Posterior vena cava (tissue), 2 donors: ENCODE measurements at regions of chr5 and their contacts with region 1.

Region 1: DNA sequence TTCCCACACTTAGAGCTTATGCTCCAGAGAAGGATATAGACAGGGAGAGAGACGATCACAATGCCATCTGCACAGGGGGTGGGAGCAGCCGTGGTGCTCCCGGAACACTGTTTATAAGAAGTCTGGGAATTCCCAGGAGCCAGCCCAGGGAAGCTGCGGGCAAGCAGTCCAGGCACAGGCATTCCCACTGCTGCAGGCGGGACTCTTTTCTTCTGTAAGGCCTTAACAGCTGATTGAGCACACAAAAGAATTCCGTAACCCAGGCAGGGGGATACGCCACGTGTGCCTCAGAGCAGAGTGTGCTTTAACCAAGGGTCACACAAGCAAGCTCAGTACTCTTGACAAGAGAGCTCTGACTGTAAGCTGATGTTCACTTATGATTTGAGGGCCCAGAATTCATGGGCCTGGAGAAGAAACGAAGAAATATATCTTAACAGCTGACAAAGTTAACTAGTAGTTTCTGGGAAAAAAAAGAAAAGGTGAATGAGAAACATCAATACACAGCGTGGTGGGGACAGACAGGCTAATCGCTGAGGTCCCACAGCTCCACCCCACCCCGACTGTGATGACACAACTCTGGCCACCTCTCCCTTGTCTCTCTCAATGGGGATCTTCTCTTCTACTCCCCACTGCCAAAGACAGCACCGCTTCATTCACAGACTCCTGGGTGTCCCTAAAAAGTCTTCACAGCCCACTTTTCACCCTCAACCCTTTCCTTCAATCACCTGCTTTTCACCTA is 85.9 kb upstream of the SIMC1 start:
- DNase-seq: no peak

Region 2: DNA sequence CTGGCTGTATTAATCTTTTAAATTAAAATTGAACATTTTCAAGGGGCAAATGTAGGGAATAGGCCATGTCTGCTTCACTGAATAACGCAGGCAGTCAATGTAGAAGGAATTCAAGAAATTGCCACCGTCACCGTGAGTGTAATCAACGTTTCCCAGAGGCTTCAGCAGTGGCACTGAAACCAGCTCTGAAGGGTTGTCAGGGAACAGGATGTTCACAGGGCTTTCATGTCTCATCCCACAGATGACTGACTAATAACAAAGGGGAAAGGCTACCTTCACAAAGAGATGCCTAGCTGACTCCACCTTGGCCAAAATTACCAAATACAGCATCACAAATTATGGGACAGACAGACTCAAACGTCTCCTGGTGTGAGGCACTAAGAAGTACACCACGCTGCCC is 15.4 kb after region 1 on chr5:
- intact Hi-C with region 1: no loop called
- DNase-seq: no peak

Region 3: DNA sequence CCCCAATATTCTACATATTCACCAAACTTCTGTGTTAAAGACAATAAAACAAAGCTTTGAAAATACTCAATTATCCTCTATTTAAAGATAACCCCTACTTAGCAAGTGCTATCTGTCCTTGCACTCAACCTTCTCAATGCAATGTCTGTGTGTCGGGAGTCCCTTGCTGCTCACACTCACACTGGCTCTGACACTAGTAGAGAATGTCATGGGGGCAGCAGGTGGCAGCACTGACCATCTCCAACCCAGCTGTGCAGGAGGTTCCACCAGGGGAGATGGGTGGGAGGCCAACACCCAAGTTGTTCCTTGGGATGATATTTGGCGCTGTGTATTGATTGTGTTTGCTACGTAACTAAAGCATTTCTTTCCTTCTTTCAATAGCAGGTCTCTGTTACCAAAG is 26.4 kb after region 1 on chr5:
- intact Hi-C with region 1: loop called in 1 of 2 experiments (anchors 1 kb)
- DNase-seq: no peak

Region 4: GRCh38 chr5:176201811-176202210 is 49.5 kb after region 1 on chr5:
- intact Hi-C with region 1: no loop called
- DNase-seq: no peak

Region 5: DNA sequence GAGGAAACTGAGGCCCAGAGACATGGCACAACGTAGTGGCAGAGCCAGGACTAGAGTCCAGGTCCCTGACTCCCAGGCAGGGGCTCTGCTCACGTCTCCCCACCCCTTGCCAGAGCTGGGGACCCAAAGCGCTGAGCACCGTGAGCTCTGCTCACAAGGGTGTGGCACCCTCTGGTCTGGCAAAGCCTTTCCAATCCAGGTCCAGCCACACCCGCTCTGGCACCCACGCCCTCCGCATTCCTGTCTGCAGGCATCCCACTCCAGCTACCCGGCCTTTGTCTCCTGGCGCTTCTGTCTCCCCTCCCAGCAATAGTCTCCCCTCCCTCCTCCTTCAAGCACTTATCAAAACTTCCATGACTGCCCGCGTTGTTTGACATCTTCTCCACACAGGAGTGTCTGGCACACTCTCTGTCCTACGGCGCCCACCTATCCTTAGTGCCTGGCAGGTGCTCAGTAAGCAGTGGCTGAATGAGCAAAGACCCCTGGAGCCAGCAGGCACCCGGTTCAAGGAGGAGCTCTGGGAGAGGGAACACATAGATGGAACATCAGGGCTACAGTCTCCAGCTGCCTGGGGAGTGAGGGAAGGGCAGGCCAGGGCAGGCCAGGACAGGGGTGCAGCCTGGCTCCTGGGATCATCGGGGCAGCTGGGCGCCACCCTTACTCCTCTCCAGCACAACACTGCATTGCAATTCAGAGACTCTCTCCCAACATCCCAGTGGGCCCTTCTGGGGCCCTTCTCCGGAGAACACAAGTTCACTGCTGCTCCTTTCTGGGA is 248.2 kb after region 1 on chr5:
- intact Hi-C with region 1: no loop called
- DNase-seq: peak; percentile 71

Region 6: GRCh38 chr5:177176175-177176711 is 1023.9 kb after region 1 on chr5:
- intact Hi-C with region 1: no loop called
- DNase-seq: no peak